OCI-LY7 (cell line): ENCODE measurements at regions of chr1 and their contacts with region 1.

Region 1: GRCh38 chr1:203861379-203862184 is at the start of gene SNRPE:
- DNase-seq: peak; percentile 99
- H3K4me3 ChIP-seq: peak within 1 kb of the TSS; percentile 90
- H3K27ac ChIP-seq: peak within 1 kb of the TSS; percentile 58
- H3K4me1 ChIP-seq: peaks cover 17% of the 10 kb centered on the region
- CTCF ChIP-seq: peak; percentile 83
- total RNA-seq, gene SNRPE: 95.9 and 109 TPM in 2 replicates

Region 2: DNA sequence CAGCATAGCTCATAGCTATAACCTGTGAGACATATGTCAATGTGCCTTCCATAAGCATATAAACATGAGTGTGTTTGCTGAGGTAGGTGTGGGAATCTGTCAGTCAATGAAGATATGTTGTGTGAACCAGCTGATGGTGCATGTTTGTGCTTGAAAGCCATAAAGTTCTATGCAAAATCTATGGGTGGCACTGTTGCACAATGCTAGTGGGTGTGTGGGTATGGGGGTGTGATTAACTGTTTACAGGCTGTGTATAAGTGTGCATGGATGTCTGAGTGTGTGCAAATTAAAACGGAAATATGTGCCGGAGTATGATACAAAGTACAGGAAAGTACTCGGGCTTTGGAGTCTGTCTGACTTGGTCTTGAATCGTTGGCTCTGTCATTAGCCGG is 236.0 kb before region 1 on chr1:
- CTCF ChIA-PET with region 1: interaction called, 10 read pairs
- POLR2A ChIA-PET with region 1: interaction called, 3 read pairs
- intact Hi-C with region 1: loop called (anchors 10 kb)
- DNase-seq: peak; percentile 77
- H3K4me3 ChIP-seq: peak overlapping the region; percentile 74
- H3K27ac ChIP-seq: peak overlapping the region; percentile 78
- H3K4me1 ChIP-seq: peaks cover 48% of the 10 kb centered on the region
- CTCF ChIP-seq: peak; percentile 78

Region 3: GRCh38 chr1:204128964-204129896 is 267.6 kb after region 1 on chr1:
- CTCF ChIA-PET with region 1: interaction called, 8 read pairs
- POLR2A ChIA-PET with region 1: interaction called, 4 read pairs
- intact Hi-C with region 1: loop called (anchors 1 kb)
- DNase-seq: peak; percentile 70
- H3K4me3 ChIP-seq: no peak overlapping the region
- H3K27ac ChIP-seq: no peak overlapping the region
- H3K4me1 ChIP-seq: peaks cover 4% of the 10 kb centered on the region
- CTCF ChIP-seq: peak; percentile 88

Region 4: DNA sequence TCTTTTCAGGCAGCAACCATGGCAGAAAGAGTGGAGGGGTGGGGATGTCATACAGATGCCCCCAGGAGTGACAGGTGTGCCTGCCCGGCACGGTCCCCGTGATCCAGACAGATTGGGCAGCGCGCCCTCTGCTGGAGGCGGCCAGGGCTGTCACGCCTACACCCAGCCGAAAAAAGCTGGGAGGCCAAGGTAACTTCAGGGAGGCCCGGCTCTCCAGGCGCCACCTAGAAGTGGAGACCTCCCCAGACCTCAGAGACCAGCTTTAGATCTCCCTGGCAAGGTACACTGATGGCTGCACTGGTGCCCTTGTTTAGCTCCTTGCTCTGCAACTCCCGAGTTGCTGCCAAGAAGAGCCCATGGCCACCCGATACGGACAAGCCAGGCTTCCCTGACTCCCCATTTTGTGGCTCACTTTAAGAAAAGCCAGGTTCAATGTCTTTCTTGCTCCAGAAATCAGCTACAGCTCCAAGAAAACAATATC is 345.6 kb after region 1 on chr1:
- CTCF ChIA-PET with region 1: no interaction called
- POLR2A ChIA-PET with region 1: no interaction called
- intact Hi-C with region 1: loop called (anchors 1 kb)
- DNase-seq: peak; percentile 57
- H3K4me3 ChIP-seq: no peak overlapping the region
- H3K27ac ChIP-seq: no peak overlapping the region
- H3K4me1 ChIP-seq: no peaks in the 10 kb centered on the region
- CTCF ChIP-seq: peak; percentile 89

Region 5: GRCh38 chr1:204411451-204412204 is 550.0 kb after region 1 on chr1 and contains the start of gene PPP1R15B:
- CTCF ChIA-PET with region 1: no interaction called
- POLR2A ChIA-PET with region 1: no interaction called
- intact Hi-C with region 1: loop called (anchors 10 kb)
- DNase-seq: peak; percentile 99
- H3K4me3 ChIP-seq: peak within 1 kb of the TSS; percentile 98
- H3K27ac ChIP-seq: peak within 1 kb of the TSS; percentile 79
- H3K4me1 ChIP-seq: peaks cover 19% of the 10 kb centered on the region
- CTCF ChIP-seq: no peak
- total RNA-seq, gene PPP1R15B: 63.5 and 72.6 TPM in 2 replicates

Region 6: DNA sequence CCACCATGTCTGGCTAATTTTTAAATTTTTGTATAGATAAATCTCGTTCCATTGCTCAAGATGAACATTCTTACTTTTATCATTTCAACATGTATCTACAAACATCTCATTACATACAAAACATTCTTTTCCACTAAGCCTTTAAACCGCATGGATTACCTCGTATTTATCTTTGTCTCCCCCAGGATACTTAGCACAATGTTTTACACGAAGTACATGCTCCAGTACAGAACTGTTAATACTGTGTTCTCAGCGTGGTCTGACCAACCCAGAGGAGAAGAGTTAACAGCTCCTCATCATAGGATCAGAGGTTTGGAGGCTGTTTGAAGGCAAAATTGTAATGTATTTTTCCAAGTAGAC is 625.7 kb after region 1 on chr1:
- CTCF ChIA-PET with region 1: no interaction called
- POLR2A ChIA-PET with region 1: no interaction called
- intact Hi-C with region 1: no loop called
- DNase-seq: no peak
- H3K4me3 ChIP-seq: no peak overlapping the region
- H3K27ac ChIP-seq: no peak overlapping the region
- H3K4me1 ChIP-seq: peaks cover 18% of the 10 kb centered on the region
- CTCF ChIP-seq: no peak